ENCODE measurements at regions of chr3 and their contacts with region 1.

Region 1: DNA sequence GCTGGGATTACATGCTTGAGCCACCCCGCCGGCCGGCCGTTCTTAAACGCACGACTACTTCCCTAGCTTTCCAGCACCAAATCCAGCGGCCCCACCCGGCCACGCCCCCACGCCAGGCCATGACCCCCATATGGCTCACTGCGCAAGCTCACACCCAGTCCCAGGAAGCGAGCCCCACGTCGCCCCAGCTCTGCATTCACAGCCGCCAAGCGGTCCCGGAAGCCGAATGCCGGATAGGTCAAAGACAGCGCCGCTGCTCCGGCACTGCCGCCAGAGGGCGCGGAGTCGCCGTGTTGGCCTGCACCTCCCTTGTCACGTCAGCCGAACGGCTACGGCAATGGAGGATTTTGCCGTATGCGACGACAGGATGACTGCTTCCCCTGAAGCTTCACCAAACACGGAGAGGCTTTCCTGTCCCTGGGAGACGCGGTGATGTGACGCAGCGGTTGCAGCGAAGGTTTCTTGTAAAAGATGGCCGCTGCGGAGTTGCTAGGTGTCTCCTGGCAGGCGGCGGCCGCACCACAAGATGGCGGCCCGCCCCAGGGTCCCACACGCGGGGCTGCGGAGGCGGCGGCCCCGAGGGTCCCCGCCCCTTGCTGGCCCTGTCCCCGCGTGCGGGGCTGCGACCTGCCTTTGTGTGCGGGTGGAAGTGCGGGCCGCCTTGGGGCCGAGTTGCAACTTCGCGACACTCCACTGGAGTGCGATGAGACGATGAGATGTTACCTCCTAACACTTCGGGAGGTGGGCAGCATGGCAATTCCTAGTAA is 30.2 kb upstream of the RPN1 start:
- DNase-seq: peak; percentile 94

Region 2: DNA sequence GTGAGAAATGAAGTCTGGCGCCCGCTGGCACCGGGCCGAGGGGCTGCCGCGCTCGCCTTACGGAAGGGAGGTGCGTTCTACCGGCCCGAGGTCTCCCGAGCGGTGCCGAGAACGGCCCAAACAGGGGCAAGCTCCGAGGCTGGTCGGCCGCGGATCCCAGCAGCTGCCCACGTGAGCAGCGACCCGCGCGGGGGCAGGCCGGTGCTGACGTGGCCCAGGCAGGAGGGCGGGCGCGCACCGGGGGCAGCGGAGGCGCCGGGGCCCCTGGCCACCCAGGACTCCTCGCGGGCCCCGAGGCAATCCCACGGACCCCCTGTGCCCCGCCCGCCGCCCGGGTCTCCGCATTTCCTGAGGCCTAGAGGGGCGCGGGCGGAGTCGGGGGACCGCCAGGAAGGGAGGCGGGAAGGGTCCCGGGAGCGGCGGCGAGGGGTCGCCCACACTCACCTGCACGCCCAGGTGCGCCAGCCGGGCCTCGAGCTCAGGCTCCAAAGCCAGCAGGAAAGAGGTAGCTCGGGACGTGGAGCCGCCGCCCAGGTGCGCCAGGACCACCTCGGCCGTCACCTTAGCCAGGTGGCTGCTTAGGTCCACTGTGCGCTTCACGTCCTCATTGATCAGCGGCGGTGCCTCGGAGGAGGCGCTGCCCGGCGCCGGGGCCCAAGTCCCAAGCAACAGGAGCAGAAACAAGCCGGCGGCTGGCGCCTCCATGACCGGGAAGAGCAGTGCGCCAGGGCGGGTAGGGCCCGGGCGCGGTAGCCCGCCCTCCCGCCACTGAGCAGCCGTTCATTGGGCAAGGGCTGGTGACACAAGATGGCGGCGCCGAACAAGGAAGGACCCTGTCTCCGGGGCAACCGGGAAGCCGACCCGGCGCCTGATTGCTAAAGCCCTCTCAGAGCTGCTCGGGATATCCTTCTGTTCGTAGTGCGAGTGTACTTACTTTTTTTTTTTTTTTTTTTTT is 30.4 kb before region 1 on chr3 and contains the start of gene RPN1:
- CTCF ChIA-PET with region 1: interaction called, 8 read pairs
- POLR2A ChIA-PET with region 1: interaction called, 22 read pairs
- DNase-seq: peak; percentile 90

Region 3: GRCh38 chr3:128725932-128726690 is 45.3 kb after region 1 on chr3 and contains the start of gene RAB7A:
- CTCF ChIA-PET with region 1: interaction called, 4 read pairs
- POLR2A ChIA-PET with region 1: interaction called, 10 read pairs
- DNase-seq: peak; percentile 98

Region 4: DNA sequence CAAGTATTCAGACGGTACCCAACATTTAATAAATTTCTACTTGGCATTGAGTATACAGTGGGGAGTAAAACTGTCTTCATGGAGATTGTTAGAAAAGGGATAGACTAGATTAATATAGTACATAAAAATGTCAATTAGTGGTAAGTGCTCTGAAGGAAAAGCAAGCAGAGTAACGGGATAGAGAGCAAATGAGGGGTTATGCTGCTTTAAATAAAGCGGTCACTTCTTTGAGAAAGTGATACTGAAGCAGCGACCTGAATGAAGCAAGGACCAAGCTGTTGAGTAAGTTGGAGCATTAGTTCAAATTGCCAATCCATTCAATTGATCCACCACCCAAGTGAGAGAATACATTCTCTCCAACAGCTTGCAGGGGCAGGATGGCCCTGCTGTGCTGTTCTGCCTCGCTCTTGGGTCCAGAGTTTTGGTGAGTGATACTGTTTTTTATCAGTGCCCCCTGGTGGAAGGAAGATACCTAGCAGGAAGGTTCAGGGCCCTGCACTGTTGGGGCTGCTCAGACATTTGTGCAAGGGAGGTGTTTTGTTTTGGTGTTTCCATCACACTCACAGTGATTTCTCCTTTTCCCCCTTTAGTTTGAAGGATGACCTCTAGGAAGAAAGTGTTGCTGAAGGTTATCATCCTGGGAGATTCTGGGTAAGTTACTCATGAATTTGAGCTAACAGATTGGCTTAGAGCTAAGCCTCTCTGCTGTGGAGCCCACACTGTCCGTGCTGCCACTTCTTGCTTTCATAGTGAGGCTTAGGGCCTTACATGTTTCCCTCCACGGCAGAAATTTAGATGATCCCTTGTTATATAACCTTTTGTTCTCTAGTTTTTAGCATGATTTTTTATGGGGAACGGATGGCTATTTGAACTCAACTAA is 114.2 kb after region 1 on chr3:
- CTCF ChIA-PET with region 1: interaction called, 16 read pairs
- POLR2A ChIA-PET with region 1: interaction called, 11 read pairs
- DNase-seq: peak; percentile 80

Region 5: DNA sequence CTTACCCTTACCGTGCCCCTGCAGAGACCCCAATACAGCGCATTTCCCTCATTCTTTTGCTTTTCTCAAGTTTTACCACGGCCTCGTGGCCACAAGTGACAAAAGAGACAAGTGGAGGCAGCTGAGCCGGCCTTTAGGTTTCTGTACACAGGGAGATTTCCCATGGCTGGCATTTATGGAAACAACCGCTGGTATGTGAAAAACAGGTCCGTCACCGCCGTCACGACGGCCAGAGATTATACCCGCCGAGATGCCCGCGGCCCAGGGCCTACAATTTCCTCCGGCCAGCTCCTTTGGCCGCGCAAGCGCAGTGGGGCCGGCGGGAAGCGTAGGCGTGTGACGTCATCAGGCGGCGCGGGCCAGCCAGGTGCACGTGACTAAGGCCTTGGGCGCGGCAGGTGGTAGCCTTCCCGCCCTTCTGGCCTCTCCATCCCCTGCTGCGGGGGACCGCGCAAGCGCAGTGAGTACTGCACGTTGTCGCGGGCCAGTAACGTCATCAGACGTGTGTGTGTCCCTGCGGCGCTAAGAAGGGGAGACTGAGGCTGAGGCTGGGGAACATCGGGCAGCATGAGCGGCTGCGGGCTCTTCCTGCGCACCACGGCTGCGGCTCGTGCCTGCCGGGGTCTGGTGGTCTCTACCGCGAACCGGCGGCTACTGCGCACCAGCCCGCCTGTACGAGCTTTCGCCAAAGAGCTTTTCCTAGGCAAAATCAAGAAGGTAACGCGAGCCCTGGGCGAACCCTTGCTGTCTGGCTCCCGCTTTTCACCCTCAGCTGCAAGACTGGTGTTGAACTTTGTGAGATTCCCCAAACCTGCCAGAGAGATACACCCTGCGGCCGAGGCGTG is 198.6 kb after region 1 on chr3 and contains the start of gene ACAD9:
- CTCF ChIA-PET with region 1: interaction called, 8 read pairs
- POLR2A ChIA-PET with region 1: interaction called, 17 read pairs
- DNase-seq: peak; percentile 99

Measured in HEK293T (cell line).